ENCODE measurements at regions of chr1 and their contacts with region 1.

Region 1: GRCh38 chr1:231040019-231040799 is at the start of gene FAM89A:
- DNase-seq: peak; percentile 90
- H3K4me3 Mint-ChIP-seq: peak within 1 kb of the TSS; percentile 85
- H3K27ac Mint-ChIP-seq: peak within 1 kb of the TSS; percentile 61
- H3K4me1 Mint-ChIP-seq: peaks cover 28% of the 10 kb centered on the region
- H3K27me3 Mint-ChIP-seq: peaks cover 30% of the 10 kb centered on the region
- total RNA-seq, gene FAM89A: 20.2 and 20.3 TPM in 2 replicates

Region 2: GRCh38 chr1:230867903-230868735 is 172.1 kb before region 1 on chr1 and contains the start of gene C1orf198:
- intact Hi-C with region 1: loop called (anchors 2 kb)
- DNase-seq: peak; percentile 91
- H3K4me3 Mint-ChIP-seq: peak within 1 kb of the TSS; percentile 89
- H3K27ac Mint-ChIP-seq: peak within 1 kb of the TSS; percentile 84
- H3K4me1 Mint-ChIP-seq: peaks cover 31% of the 10 kb centered on the region
- H3K27me3 Mint-ChIP-seq: peaks cover 35% of the 10 kb centered on the region
- total RNA-seq, gene C1orf198: 12.4 and 13.7 TPM in 2 replicates

Region 3: GRCh38 chr1:231059566-231060193 is 19.5 kb after region 1 on chr1:
- intact Hi-C with region 1: no loop called
- DNase-seq: no peak
- H3K4me3 Mint-ChIP-seq: no peak overlapping the region
- H3K27ac Mint-ChIP-seq: no peak overlapping the region
- H3K4me1 Mint-ChIP-seq: no peaks in the 10 kb centered on the region
- H3K27me3 Mint-ChIP-seq: peaks cover 11% of the 10 kb centered on the region

Region 4: GRCh38 chr1:231070758-231071444 is 30.7 kb after region 1 on chr1:
- intact Hi-C with region 1: no loop called
- DNase-seq: no peak
- H3K4me3 Mint-ChIP-seq: no peak overlapping the region
- H3K27ac Mint-ChIP-seq: no peak overlapping the region
- H3K4me1 Mint-ChIP-seq: no peaks in the 10 kb centered on the region
- H3K27me3 Mint-ChIP-seq: peaks cover 11% of the 10 kb centered on the region

Measured in activated CD4-positive, alpha-beta T cell treated with anti-CD3 and anti-CD28 coated beads, Interleukin-2, amount 10 ng/mL, durations not matched to agents 24 days and 14 days (primary cell).